ENCODE measurements at regions of chr2 and their contacts with region 1.

Region 1: GRCh38 chr2:223993621-223994232 is 36.5 kb downstream of the MRPL44 start:
- DNase-seq: peak; percentile 53
- H3K4me3 ChIP-seq: no peak overlapping the region
- H3K27ac ChIP-seq: no peak overlapping the region
- H3K27me3 ChIP-seq: no peaks in the 10 kb centered on the region
- CTCF ChIP-seq: peak; percentile 84

Region 2: GRCh38 chr2:223720367-223720766 is 273.4 kb before region 1 on chr2:
- CTCF ChIA-PET with region 1: no interaction called
- POLR2A ChIA-PET with region 1: no interaction called
- DNase-seq: no peak
- H3K4me3 ChIP-seq: no peak overlapping the region
- H3K27ac ChIP-seq: no peak overlapping the region
- H3K27me3 ChIP-seq: no peaks in the 10 kb centered on the region
- CTCF ChIP-seq: no peak

Region 3: DNA sequence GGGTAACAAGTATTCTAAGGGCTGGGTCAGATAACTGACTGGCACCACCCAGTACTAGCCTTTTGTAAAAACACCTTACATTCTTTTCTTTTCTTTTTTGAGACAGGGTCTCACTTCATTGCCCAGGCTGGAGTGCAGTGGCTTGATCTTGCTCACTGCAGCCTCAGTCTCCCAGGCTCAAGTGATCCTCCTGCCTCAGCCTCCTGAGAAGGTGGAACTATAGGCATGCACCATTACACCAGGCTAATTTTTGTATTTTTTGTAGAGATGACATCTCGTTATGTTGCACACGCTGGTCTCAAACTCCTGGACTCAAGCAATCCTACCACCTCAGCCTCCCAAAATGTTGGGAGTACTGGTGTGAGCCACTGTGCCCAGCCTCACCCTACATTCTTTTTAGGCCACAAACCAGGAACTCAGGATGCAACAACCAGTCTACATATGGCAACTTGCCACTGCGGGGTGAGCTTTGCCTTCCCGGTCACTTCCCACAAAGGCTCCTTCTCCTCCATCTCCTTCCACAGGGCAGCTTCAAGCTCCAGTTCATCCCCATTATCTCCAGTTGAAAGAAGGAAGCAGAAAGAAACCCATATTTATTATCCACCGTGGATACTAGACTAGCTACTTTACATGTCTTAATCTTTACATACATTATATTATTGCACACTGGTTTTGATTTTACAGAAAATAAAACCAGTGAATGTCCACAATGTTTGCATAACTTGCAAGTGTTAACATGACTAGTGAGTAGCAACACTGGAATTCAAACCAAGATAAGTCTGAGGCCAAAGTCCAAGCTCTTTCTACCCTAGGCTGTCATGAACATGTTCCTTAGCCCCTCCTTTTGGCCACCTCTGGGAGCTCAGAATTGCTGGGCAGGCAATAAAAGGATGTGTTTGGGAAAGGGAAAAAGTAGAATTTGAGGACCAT is 132.7 kb before region 1 on chr2:
- CTCF ChIA-PET with region 1: no interaction called
- POLR2A ChIA-PET with region 1: no interaction called
- DNase-seq: no peak
- H3K4me3 ChIP-seq: no peak overlapping the region
- H3K27ac ChIP-seq: no peak overlapping the region
- H3K27me3 ChIP-seq: no peaks in the 10 kb centered on the region
- CTCF ChIP-seq: no peak

Region 4: DNA sequence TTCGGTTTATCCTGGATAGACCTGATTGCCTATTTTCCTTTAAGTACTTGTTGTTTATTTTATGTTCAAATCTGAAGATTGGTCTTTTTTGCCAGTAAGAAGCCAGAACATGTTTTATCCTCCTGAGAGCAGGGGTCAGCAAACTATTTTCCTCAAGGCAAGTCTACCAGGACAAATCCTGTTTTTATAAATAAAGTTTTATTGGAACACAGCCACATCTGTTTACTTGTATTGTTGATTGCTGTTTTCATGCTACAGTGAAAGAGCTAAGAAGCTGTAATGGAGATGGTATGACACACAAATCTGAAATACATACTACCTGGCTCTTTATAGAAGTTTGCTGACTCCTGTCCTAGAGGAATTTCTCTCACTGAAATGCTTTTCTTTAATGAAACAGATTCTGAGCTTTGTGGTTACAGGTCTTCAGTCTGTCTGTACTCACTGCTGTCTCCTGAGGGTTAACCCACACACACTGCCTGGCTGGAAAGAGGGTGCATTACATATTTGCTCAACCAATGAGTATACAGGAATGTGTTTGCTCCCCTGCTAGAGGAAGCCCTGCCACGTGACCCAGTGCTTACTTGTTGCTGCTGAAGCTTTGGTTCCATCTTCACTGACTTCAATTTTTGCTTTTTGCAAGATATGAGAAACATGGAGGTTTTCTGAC is 13.9 kb before region 1 on chr2:
- CTCF ChIA-PET with region 1: interaction called, 137 read pairs
- POLR2A ChIA-PET with region 1: no interaction called
- DNase-seq: no peak
- H3K4me3 ChIP-seq: no peak overlapping the region
- H3K27ac ChIP-seq: no peak overlapping the region
- H3K27me3 ChIP-seq: no peaks in the 10 kb centered on the region
- CTCF ChIP-seq: no peak

Region 5: DNA sequence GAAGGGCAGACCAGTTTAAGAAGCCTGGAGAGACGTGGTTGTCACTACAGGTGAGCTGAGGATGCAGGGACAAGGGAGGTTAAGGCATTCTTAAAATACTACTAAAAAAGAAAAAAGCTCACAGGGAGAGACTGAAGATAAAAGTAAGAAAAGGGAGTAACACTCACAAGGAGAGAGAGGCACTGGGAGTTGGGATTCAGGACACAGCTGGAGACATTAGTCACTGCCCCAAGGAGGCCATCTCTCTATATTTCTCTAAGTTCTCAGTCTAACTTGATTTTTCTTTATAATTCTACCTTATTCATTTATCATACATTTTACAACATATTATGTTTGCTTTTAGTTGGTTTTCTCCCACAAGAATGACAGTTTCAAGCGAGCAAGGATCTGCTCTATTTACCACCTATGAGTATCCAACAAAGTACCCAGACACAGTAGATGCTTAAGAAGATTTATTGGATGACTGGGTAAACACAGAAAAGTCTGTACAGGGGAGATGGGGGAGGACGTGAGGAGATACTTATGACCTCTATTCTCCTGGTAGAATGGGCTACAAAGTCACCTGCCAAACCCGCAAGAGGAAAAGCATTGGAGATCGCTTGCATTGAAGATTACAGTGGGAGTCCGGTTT is 43.1 kb after region 1 on chr2:
- CTCF ChIA-PET with region 1: interaction called, 14 read pairs
- POLR2A ChIA-PET with region 1: no interaction called
- DNase-seq: no peak
- H3K4me3 ChIP-seq: no peak overlapping the region
- H3K27ac ChIP-seq: no peak overlapping the region
- H3K27me3 ChIP-seq: peaks cover 3% of the 10 kb centered on the region
- CTCF ChIP-seq: no peak

Region 6: GRCh38 chr2:224252631-224253030 is 258.9 kb after region 1 on chr2:
- CTCF ChIA-PET with region 1: interaction called, 10 read pairs
- POLR2A ChIA-PET with region 1: no interaction called
- DNase-seq: peak; percentile 16
- H3K4me3 ChIP-seq: no peak overlapping the region
- H3K27ac ChIP-seq: no peak overlapping the region
- H3K27me3 ChIP-seq: no peaks in the 10 kb centered on the region
- CTCF ChIP-seq: no peak

Region 7: GRCh38 chr2:224278531-224278930 is 284.8 kb after region 1 on chr2:
- CTCF ChIA-PET with region 1: interaction called, 477 read pairs
- POLR2A ChIA-PET with region 1: interaction called, 9 read pairs
- DNase-seq: no peak
- H3K4me3 ChIP-seq: no peak overlapping the region
- H3K27ac ChIP-seq: no peak overlapping the region
- H3K27me3 ChIP-seq: no peaks in the 10 kb centered on the region
- CTCF ChIP-seq: no peak

Measured in AG04450 (cell line).